Transverse colon (tissue), 4 donors: ENCODE measurements at regions of chr5 and their contacts with region 1.

Region 1: DNA sequence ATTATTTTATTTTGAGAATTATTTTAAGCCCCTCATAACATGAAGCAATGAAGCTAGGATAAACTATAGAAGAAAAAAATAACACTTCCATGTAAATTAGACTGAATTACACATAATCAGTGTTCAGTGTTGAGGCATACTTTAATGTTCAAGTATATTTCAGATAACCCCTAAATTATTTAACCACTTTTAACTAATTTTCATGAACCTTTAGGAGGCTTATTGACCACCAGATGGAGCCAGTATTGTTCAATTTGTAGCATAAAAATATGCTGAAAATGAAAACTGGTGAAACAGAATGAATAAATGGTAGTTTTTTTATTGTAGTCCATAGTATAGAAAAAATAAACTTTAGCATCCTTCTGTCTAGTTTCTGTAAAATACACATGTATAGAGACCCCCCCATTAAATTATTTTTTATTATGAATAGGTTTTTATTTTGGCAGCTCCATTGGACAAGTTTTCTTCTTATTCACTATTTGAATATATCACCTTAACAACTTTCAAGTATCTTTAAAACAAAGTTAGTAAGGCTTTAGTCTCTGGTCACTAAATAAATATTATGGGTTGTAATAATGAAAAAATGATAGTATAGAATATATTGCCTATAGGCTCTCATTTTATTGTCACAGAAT is 190.1 kb downstream of the CWC27 start:
- DNase-seq: no peak
- H3K4me3 ChIP-seq: no peak overlapping the region
- H3K27ac ChIP-seq: no peak overlapping the region
- H3K4me1 ChIP-seq: no peaks in the 10 kb centered on the region
- H3K27me3 ChIP-seq: no peaks in the 10 kb centered on the region
- CTCF ChIP-seq: peak in 4 of 5 experiments; percentile 37 to 51 (median 47)
- EP300 ChIP-seq: no peak
- POLR2A ChIP-seq: no peak

Region 2: DNA sequence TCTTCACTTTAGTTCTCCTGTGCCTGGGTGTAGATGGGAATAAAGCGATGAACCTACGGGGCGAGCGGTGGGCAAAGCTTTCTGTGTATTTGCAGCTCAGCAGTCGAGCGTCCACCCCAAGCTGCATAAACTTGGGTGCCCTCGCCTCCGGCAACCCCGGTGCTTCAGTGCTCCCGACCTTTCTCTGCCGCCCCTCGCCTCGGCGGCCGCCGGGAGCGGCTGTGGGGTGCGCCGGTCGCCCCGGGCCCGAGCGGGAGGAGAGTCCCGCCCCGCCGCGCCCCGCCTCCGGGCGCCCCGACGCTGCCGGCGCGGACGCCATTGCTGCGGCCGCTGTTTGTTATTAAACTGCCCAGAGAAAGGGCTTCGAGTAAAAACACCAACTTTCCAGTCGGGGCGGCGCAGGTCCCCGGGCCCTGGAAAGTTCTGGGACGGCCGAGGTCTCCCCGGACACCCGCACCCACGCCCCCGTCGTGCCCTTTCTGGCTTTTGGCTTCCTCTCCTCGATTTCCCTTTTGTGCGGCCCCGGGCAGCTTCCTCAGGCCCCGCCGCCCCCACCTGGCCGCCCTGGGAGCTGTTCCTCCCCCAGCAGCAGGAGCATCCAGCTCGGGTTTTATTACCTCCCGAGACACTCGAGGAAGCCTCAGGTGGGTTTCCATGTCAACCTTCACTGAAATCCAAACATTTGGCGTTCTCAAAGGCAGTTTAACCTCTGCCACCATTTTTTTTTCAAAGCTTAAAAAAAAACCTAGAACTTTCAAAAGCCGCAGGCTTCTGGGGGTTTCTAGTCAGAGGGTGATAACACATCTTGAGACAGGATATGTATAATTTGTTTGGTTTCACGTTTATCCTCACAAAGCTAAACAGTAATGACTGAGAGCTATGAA is 144.2 kb after region 1 on chr5:
- in situ Hi-C with region 1: no loop called
- intact Hi-C with region 1: loop called (anchors 10 kb)
- DNase-seq: peak; percentile 70
- H3K4me3 ChIP-seq: peak overlapping the region; percentile 60 to 84 (median 68)
- H3K27ac ChIP-seq: peak overlapping the region; percentile 80 to 94 (median 90)
- H3K4me1 ChIP-seq: peaks cover 0 to 14% (median 4%) of the 10 kb centered on the region in 4 donors
- H3K27me3 ChIP-seq: no peaks in the 10 kb centered on the region
- CTCF ChIP-seq: peak; percentile 21 to 35 (median 27)
- EP300 ChIP-seq: no peak
- POLR2A ChIP-seq: no peak

Region 3: DNA sequence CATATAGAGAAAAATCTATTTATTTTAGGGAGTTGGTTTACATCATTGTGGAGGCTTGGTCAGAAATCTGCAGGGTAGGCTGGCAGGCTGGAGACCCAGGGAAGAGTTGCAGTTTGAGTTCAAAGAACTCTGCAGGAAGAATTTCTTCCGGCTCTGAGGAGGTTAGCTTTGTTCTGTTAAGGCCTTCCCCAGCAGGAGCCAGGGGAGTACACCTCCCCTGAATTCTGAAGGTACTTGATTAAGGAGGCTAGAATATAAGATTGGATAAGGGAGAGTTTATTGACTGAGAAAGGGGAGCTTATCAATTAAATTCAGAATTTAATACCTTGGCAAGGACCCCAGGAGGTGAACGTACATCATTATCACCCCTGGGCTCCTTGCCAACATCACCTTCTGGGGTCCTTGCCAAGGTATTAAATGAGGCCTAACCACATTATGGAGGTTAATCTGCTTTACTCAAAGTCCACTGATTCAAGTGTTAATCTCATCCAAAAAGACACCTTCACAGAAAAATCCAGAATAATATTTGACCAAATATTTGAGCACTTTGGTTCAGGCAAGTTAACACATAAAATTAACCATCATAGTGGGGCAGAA is 161.6 kb after region 1 on chr5:
- in situ Hi-C with region 1: no loop called
- intact Hi-C with region 1: no loop called
- DNase-seq: no peak
- H3K4me3 ChIP-seq: no peak overlapping the region
- H3K27ac ChIP-seq: no peak overlapping the region
- H3K4me1 ChIP-seq: no peaks in the 10 kb centered on the region
- H3K27me3 ChIP-seq: no peaks in the 10 kb centered on the region
- CTCF ChIP-seq: no peak
- EP300 ChIP-seq: no peak
- POLR2A ChIP-seq: no peak

Region 4: DNA sequence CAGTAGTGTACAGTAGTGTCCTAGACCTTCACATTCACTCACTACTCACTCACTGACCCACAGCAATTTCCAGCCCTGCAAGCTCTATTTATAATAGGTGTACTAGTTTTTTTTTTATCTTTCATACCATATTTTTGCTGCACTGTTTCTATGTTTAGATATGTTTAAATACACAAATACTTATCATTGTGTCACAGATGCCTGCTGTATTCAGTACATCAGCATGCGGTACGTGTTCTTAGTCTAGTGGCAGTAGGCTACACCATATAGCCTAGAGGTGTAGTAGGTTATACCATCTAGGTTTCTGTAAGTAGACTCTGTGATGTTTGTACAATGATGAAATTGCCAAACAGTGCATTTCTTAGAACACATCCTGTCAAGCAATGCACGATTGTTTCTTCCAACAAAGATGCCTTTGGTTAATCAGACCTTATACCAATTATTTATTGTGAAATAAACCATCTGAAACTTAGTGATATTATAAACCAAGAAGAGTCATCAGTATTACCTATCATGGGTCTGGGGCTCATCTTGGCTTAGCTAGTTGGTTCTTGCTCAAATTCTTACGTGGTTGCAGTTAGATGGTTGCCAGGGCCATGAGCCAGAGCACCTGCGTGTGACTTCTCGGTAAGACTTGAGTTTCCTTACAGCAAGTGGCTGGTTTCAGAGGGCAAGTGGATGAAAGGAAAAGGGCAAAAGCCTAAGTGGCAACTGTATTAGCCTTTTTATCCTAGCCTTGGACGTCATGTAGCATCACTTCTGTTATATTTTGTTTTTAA is 1008.6 kb after region 1 on chr5:
- in situ Hi-C with region 1: no loop called
- intact Hi-C with region 1: no loop called
- DNase-seq: no peak
- H3K4me3 ChIP-seq: no peak overlapping the region
- H3K27ac ChIP-seq: no peak overlapping the region
- H3K4me1 ChIP-seq: peaks cover 0 to 47% (median 10%) of the 10 kb centered on the region in 4 donors
- H3K27me3 ChIP-seq: no peaks in the 10 kb centered on the region
- CTCF ChIP-seq: no peak
- EP300 ChIP-seq: no peak
- POLR2A ChIP-seq: no peak